Motor neuron (in vitro differentiated cells): ENCODE measurements at regions of chr2 and their contacts with region 1.

Region 1: GRCh38 chr2:95179451-95179850 is 13.8 kb downstream of the ZNF2 start:
- ATAC-seq: no peak
- H3K4me3 ChIP-seq: no peak overlapping the region
- H3K27ac ChIP-seq: no peak overlapping the region
- H3K4me1 ChIP-seq: no peaks in the 10 kb centered on the region

Region 2: GRCh38 chr2:95289253-95289652 is 109.8 kb after region 1 on chr2:
- in situ Hi-C with region 1: no loop called
- ATAC-seq: peak in 1 of 8 experiments; percentile 63
- H3K4me3 ChIP-seq: no peak overlapping the region
- H3K27ac ChIP-seq: no peak overlapping the region
- H3K4me1 ChIP-seq: no peaks in the 10 kb centered on the region

Region 3: DNA sequence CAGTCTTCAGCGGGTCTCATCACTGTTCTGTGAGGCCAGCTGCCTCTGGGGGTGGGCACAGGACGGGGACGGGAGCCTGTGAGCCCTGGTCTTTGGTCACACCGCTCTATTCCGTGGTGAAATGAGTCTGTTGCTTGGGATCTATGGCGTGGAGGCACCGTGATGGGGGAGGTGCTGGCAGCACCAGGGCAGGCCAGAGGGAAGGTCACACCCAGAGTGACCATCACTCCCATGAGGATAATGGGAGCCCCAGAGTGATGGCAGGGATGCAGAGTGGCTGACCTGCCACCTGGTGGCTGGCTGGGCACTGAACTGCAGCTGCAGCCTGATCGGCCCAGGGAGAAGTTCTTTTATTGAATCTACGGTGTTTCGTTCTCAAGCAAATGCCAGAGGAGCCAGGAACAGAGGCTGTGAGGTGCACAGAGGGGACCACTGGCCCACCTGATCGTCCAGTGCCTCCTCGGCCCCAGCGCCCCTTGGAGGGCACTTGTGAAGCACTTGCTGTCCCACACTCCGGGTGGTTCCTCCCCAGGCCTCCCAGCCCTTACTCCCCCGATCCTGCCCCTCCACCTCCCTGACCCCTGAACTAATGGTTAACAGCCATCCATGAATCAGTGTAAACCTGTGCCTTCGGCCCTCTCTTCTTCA is 135.6 kb after region 1 on chr2:
- in situ Hi-C with region 1: loop called in 1 of 9 experiments (anchors 25 kb)
- ATAC-seq: peak; percentile 47 to 82 (median 74)
- H3K4me3 ChIP-seq: no peak overlapping the region
- H3K27ac ChIP-seq: no peak overlapping the region
- H3K4me1 ChIP-seq: peaks cover 15 to 25% of the 10 kb centered on the region in 2 donors